CD4-positive, alpha-beta T cell (primary cell): ENCODE measurements at regions of chr5 and their contacts with region 1.

Region 1: GRCh38 chr5:146151970-146152369 is 30.5 kb downstream of the LARS1 start:
- DNase-seq: no peak
- ATAC-seq: no peak
- H3K4me3 ChIP-seq: no peak overlapping the region
- H3K4me3 Mint-ChIP-seq: no peak overlapping the region
- H3K27ac ChIP-seq: no peak overlapping the region
- H3K27ac Mint-ChIP-seq: no peak overlapping the region
- H3K4me1 ChIP-seq: no peaks in the 10 kb centered on the region
- H3K4me1 Mint-ChIP-seq: no peaks in the 10 kb centered on the region
- H3K27me3 ChIP-seq: no peaks in the 10 kb centered on the region
- H3K27me3 Mint-ChIP-seq: no peaks in the 10 kb centered on the region
- CTCF ChIP-seq: no peak

Region 2: GRCh38 chr5:146118322-146118721 is 33.6 kb before region 1 on chr5:
- CTCF ChIA-PET with region 1: no interaction called
- POLR2A ChIA-PET with region 1: no interaction called
- intact Hi-C with region 1: loop called in 1 of 2 experiments (anchors 2 kb)
- DNase-seq: no peak
- ATAC-seq: no peak
- H3K4me3 ChIP-seq: no peak overlapping the region
- H3K4me3 Mint-ChIP-seq: no peak overlapping the region
- H3K27ac ChIP-seq: no peak overlapping the region
- H3K27ac Mint-ChIP-seq: no peak overlapping the region
- H3K4me1 ChIP-seq: no peaks in the 10 kb centered on the region
- H3K4me1 Mint-ChIP-seq: no peaks in the 10 kb centered on the region
- H3K27me3 ChIP-seq: no peaks in the 10 kb centered on the region
- H3K27me3 Mint-ChIP-seq: no peaks in the 10 kb centered on the region
- CTCF ChIP-seq: no peak

Region 3: DNA sequence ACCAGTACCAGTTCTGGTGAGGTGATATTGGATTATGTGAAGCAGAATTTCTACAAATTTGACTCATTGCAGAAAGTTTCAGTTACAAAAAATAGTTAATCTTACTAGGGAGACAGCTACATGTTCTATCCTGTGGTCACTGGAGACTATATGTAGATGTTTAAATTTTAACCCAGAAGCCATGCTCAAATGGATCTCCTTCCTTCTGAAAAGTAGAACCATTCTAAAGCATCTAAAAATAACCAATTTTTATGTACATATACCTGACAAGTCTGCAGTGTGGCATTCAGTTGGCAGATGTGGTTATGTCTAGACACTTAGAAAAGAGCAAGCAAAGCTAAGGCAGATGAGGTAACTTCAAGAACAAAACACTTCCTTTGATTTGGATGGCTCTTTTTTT is 121.1 kb after region 1 on chr5:
- CTCF ChIA-PET with region 1: no interaction called
- POLR2A ChIA-PET with region 1: no interaction called
- intact Hi-C with region 1: loop called in 1 of 2 experiments (anchors 5 kb)
- DNase-seq: no peak
- ATAC-seq: no peak
- H3K4me3 ChIP-seq: no peak overlapping the region
- H3K4me3 Mint-ChIP-seq: no peak overlapping the region
- H3K27ac ChIP-seq: no peak overlapping the region
- H3K27ac Mint-ChIP-seq: no peak overlapping the region
- H3K4me1 ChIP-seq: no peaks in the 10 kb centered on the region
- H3K4me1 Mint-ChIP-seq: no peaks in the 10 kb centered on the region
- H3K27me3 ChIP-seq: no peaks in the 10 kb centered on the region
- H3K27me3 Mint-ChIP-seq: no peaks in the 10 kb centered on the region
- CTCF ChIP-seq: no peak

Region 4: DNA sequence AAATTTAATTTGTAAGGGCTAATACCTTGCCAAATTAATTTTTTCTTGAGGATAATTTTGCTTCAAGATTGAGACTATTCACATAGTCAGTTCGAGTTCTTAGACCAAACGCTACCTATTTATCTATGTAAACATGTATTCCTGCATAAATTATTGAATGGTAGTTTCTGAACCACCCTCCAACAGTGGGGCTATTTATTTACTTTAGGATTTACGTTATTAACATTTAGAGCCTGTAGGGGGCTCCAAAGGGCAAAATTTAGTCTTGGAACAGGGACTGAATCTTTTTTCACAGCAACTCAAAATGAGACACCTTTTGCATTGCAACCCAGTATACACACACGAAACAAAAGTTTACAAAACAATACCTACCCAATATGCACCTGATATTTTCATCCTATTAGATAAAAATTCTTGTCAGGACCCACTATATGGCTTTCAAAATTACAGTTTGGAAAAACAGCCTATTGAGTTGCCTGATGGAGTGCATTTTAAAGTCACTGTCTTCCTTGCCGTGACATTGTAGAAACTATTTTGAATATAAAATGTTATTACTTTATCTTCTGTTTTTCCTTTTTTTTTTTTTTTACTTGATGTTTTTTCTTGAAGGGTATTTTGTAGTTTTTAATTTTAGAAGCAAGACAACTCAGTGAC is 139.6 kb after region 1 on chr5:
- CTCF ChIA-PET with region 1: no interaction called
- POLR2A ChIA-PET with region 1: no interaction called
- intact Hi-C with region 1: no loop called
- DNase-seq: peak in 4 of 14 experiments; percentile 14 to 68 (median 52)
- ATAC-seq: peak; percentile 63
- H3K4me3 ChIP-seq: no peak overlapping the region
- H3K4me3 Mint-ChIP-seq: no peak overlapping the region
- H3K27ac ChIP-seq: no peak overlapping the region
- H3K27ac Mint-ChIP-seq: no peak overlapping the region
- H3K4me1 ChIP-seq: no peaks in the 10 kb centered on the region
- H3K4me1 Mint-ChIP-seq: no peaks in the 10 kb centered on the region
- H3K27me3 ChIP-seq: no peaks in the 10 kb centered on the region
- H3K27me3 Mint-ChIP-seq: no peaks in the 10 kb centered on the region
- CTCF ChIP-seq: peak; percentile 80